GM12878 (cell line): ENCODE measurements at regions of chr1 and their contacts with region 1.

Region 1: DNA sequence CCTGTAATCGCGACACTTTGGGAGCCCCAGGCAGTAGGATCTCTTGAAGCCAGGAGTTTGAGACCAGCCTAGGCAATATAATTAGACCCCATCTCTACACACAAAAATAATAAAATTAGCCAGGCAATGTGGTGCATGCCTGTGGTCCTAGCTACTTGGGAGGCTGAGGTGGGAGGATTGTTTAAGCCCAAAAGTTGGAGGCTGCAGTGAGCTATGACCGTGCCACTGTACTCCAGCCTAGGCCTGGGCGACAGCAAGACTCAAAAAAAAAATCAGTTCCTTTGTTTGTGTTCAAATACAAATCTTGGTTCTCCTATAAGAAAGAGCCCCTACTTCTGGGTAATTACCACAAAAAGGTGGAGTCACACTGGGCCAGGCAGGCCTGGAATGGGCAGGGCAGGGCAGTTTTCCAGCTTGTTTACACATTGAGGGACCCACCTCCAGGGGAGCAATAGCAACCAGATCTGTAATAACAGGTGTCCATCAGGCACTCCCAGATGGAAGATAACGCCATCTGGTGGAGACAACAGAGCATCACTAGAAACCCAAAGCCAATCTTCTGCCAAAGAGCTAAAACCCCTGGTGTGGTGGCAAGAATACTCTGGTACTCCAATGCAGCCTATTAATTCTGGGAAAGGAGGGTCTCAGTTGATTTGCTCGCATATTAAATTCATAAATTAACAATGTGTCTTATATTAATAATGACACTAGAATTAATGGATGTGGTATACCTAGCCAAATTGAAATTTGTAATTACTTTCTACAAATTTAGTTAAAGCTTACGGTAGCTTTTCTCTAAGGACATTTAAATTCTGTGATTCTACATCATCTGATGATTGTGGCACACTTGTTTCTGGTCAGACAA is 13.2 kb downstream of the PPP1R15B start:
- DNase-seq: no peak
- ATAC-seq: peak; percentile 94
- H3K4me3 ChIP-seq: no peak overlapping the region
- H3K27ac ChIP-seq: no peak overlapping the region
- H3K4me1 ChIP-seq: no peaks in the 10 kb centered on the region
- H3K27me3 ChIP-seq: no peaks in the 10 kb centered on the region
- CTCF ChIP-seq: peak; percentile 83 to 91 (median 86)
- EP300 ChIP-seq: no peak
- POLR2A ChIP-seq: no peak
- RAD21 ChIP-seq: peak; percentile 62

Region 2: DNA sequence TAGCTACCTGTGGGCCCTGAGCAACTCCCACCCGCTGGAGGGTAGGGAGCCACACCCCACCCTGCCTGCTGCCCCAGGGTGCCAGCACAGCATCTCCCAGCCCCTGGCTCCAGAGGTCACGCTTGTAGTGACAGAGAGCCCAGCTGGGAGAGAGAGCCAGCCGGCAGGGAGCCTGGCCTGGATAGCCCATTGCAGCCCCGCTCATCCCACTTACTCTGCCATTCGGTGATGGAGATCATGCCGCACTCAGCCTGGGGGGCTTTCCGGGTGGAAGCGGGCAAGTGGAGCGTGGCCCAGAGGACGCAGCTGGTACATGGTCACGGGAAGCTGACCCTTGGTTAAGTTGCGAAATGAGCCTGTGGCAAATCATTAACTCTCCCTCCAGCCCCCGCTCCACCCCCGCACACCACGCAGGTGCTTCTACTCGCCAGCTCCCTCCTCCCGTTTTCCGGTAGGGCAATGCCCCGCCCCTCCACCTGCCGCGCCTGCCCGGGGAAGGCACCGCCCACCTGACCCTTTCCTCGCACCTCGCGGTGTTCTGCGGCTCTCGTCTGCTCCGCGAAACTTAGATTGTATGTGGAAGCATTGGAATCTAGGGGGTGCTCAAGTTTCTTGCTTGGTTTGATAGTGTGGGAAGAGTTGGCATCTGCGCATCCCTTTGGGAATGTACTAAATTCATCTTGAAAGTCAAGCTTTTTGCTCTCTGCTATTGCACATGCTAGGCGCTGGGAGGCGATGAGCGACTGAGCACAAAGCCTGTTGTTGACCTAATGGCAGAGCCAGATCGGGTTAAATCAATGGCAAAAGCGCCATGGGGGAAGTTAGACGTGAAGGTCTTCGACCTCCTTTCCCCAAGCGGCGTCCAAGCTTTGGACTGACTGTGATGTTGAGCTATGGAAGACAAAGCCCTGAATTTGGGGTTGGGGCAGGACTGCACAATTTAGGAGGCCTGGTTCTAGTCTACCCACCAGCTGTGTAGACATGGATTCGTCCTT is 184.5 kb before region 1 on chr1 and contains the start of gene GOLT1A:
- CTCF ChIA-PET with region 1: interaction called, 27 read pairs
- POLR2A ChIA-PET with region 1: no interaction called
- RAD21 ChIA-PET with region 1: interaction called, 5 read pairs
- SMC1A ChIA-PET with region 1: interaction called, 4 read pairs
- in situ Hi-C with region 1: no loop called
- intact Hi-C with region 1: no loop called
- DNase-seq: peak; percentile 28
- ATAC-seq: peak; percentile 84
- H3K4me3 ChIP-seq: no peak within 1 kb of the TSS
- H3K27ac ChIP-seq: no peak within 1 kb of the TSS
- H3K4me1 ChIP-seq: no peaks in the 10 kb centered on the region
- H3K27me3 ChIP-seq: peaks cover 0 to 2% of the 10 kb centered on the region in 2 experiments; a peak in 1 of 4 replicates
- CTCF ChIP-seq: peak; percentile 22 to 26 (median 25); a peak in 4 of 6 replicates
- EP300 ChIP-seq: 0 out of 4 replicates have a peak, but pooled peaks of 1 of the 2 experiments have one; percentile 21
- POLR2A ChIP-seq: no peak
- RAD21 ChIP-seq: peak; percentile 25; the same call in 1 of the 2 replicates
- polyA plus RNA-seq, gene GOLT1A: 0.09 TPM in 1 of 2 experiments, not detected in the other

Region 3: DNA sequence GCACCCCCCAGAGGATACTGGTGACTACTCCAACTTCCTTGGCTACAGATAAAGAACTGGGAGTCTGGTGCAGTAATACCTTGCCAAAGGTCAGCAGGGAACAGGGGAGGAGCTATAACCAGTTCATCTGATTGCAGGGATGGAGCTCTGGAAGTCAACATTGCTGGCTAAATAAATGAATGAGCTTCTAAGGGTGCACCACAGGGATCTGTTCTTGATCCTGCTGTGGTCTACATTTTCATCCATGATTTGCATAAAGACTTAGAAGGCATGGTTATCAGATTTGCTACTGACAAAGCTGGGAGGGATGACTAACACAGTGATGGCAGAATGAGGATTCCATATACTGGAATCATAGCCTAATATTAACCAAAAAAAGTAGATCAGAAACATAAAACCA is 57.1 kb before region 1 on chr1:
- CTCF ChIA-PET with region 1: interaction called, 13 read pairs
- POLR2A ChIA-PET with region 1: no interaction called
- RAD21 ChIA-PET with region 1: interaction called, 3 read pairs
- SMC1A ChIA-PET with region 1: interaction called, 4 read pairs
- in situ Hi-C with region 1: no loop called
- intact Hi-C with region 1: no loop called
- DNase-seq: no peak
- ATAC-seq: no peak
- H3K4me3 ChIP-seq: no peak overlapping the region
- H3K27ac ChIP-seq: no peak overlapping the region
- H3K4me1 ChIP-seq: no peaks in the 10 kb centered on the region
- H3K27me3 ChIP-seq: peaks cover 3 to 7% of the 10 kb centered on the region in 2 experiments
- CTCF ChIP-seq: no peak
- EP300 ChIP-seq: no peak
- POLR2A ChIP-seq: no peak
- RAD21 ChIP-seq: no peak

Region 4: DNA sequence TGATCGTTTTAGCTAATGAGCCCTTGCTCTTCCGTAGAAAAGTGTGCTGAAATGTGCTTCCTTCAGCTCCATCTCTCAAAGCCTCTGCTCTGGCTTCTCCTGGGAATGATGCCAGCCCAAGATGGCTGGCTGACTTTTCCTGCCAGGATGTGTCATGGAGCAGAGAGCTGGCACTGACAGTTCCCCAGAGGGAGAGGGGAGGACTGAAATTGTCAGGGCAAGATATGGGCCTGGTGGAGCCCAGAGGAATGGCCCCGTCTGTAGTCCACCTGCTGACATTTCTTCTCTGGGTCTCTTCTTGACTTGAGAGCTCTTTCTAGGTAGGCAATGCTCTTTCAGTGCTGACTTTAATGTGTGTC is 13.5 kb before region 1 on chr1:
- CTCF ChIA-PET with region 1: interaction called, 297 read pairs
- POLR2A ChIA-PET with region 1: interaction called, 8 read pairs
- RAD21 ChIA-PET with region 1: interaction called, 133 read pairs
- SMC1A ChIA-PET with region 1: interaction called, 109 read pairs
- in situ Hi-C with region 1: no loop called
- intact Hi-C with region 1: no loop called
- DNase-seq: no peak
- ATAC-seq: no peak
- H3K4me3 ChIP-seq: no peak overlapping the region
- H3K27ac ChIP-seq: no peak overlapping the region
- H3K4me1 ChIP-seq: peaks cover 6% of the 10 kb centered on the region
- H3K27me3 ChIP-seq: no peaks in the 10 kb centered on the region; a peak in 1 of 4 replicates
- CTCF ChIP-seq: no peak
- EP300 ChIP-seq: no peak
- POLR2A ChIP-seq: no peak
- RAD21 ChIP-seq: no peak

Region 5: GRCh38 chr1:204446370-204447111 is 48.1 kb after region 1 on chr1:
- CTCF ChIA-PET with region 1: interaction called, 17 read pairs
- POLR2A ChIA-PET with region 1: no interaction called
- RAD21 ChIA-PET with region 1: interaction called, 3 read pairs
- SMC1A ChIA-PET with region 1: interaction called, 5 read pairs
- in situ Hi-C with region 1: no loop called
- intact Hi-C with region 1: no loop called
- DNase-seq: no peak
- ATAC-seq: peak; percentile 98
- H3K4me3 ChIP-seq: no peak overlapping the region
- H3K27ac ChIP-seq: no peak overlapping the region
- H3K4me1 ChIP-seq: peaks cover 5% of the 10 kb centered on the region
- H3K27me3 ChIP-seq: no peaks in the 10 kb centered on the region
- CTCF ChIP-seq: peak; percentile 80 to 92 (median 89); a peak in 5 of 6 replicates
- EP300 ChIP-seq: no peak
- POLR2A ChIP-seq: no peak
- RAD21 ChIP-seq: peak; percentile 99